Activated CD8-positive, alpha-beta T cell treated with anti-CD3 and anti-CD28 coated beads for 36 hours (primary cell): ENCODE measurements at regions of chr14 and their contacts with region 1.

Region 1: DNA sequence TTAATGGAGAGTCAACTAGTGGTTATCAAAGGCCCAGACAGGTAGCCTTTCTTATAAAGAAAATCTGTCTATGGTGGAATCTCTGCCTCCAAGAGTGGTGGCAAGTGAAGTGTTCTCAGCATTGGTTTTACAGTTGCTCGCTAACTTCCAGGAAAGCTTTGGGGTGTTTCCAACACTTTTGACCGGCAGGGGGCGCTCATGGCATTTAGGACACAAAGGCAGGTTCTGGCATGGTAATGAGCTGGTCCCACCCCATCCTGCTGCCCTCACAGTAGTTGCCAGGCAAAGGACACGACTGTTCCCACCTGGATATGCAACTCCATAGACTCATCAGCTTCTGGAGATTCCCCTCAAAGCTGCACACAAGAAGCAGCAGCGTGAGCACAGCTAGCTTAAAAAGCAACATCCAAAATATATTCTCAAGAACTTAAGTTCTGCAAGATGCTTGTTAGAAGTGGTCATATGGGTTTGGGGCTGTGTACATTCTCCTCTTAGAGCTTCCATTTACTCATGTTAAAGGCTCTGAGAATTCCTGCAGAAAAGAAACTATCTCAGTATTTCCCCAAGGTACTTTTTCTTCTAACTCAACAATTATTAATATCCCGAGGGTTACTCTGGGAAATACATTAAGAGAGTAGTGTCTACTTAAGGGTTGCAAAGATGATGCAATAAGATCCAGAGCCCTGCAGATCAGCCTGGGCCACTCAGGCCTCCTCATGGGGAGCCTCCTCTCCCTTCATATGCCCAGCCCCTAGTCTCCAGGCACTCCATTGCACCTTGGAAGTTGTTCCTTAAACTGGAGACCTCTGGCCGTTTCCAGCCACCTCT is 14.8 kb downstream of the PROX2 start:
- DNase-seq: peak; percentile 97
- ATAC-seq: peak; percentile 83
- H3K4me3 Mint-ChIP-seq: no peak overlapping the region
- H3K27ac Mint-ChIP-seq: no peak overlapping the region
- H3K4me1 Mint-ChIP-seq: peaks cover 5% of the 10 kb centered on the region
- H3K27me3 Mint-ChIP-seq: no peaks in the 10 kb centered on the region
- CTCF ChIP-seq: peak; percentile 91

Region 2: DNA sequence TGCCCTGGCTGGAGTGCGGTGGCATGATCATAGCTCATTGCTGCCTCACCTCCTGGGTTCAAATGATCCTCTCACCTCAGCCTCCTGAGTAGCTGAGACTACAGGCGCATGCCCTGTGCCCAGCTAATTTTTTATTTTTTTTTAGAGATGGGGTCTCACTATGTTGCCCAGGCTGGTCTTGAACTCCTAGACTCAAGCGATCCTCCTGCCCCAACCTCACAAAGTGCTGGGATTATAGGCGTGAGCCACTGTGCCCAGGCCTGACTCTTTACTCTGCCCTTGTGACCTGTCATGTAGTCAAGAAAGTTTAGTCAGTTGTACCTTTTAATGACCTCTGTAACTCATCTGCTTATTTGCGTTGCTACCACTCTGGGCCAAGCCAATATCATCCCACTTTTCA is 40.8 kb before region 1 on chr14:
- CTCF ChIA-PET with region 1: no interaction called
- POLR2A ChIA-PET with region 1: no interaction called
- intact Hi-C with region 1: no loop called
- DNase-seq: no peak
- ATAC-seq: no peak
- H3K4me3 Mint-ChIP-seq: no peak overlapping the region
- H3K27ac Mint-ChIP-seq: no peak overlapping the region
- H3K4me1 Mint-ChIP-seq: peaks cover 5% of the 10 kb centered on the region
- H3K27me3 Mint-ChIP-seq: no peaks in the 10 kb centered on the region
- CTCF ChIP-seq: no peak

Region 3: GRCh38 chr14:74841230-74842207 is 19.6 kb before region 1 on chr14:
- CTCF ChIA-PET with region 1: interaction called, 70 read pairs
- POLR2A ChIA-PET with region 1: interaction called, 19 read pairs
- intact Hi-C with region 1: no loop called
- DNase-seq: peak; percentile 56
- ATAC-seq: peak; percentile 78
- H3K4me3 Mint-ChIP-seq: peak overlapping the region; percentile 0
- H3K27ac Mint-ChIP-seq: peak overlapping the region; percentile 60
- H3K4me1 Mint-ChIP-seq: peaks cover 64% of the 10 kb centered on the region
- H3K27me3 Mint-ChIP-seq: no peaks in the 10 kb centered on the region
- CTCF ChIP-seq: no peak

Region 4: GRCh38 chr14:74893614-74894091 is 32.5 kb after region 1 on chr14:
- CTCF ChIA-PET with region 1: interaction called, 94 read pairs
- POLR2A ChIA-PET with region 1: interaction called, 4 read pairs
- intact Hi-C with region 1: no loop called
- DNase-seq: no peak
- ATAC-seq: no peak
- H3K4me3 Mint-ChIP-seq: no peak overlapping the region
- H3K27ac Mint-ChIP-seq: peak overlapping the region; percentile 34
- H3K4me1 Mint-ChIP-seq: no peaks in the 10 kb centered on the region
- H3K27me3 Mint-ChIP-seq: no peaks in the 10 kb centered on the region
- CTCF ChIP-seq: no peak

Region 5: DNA sequence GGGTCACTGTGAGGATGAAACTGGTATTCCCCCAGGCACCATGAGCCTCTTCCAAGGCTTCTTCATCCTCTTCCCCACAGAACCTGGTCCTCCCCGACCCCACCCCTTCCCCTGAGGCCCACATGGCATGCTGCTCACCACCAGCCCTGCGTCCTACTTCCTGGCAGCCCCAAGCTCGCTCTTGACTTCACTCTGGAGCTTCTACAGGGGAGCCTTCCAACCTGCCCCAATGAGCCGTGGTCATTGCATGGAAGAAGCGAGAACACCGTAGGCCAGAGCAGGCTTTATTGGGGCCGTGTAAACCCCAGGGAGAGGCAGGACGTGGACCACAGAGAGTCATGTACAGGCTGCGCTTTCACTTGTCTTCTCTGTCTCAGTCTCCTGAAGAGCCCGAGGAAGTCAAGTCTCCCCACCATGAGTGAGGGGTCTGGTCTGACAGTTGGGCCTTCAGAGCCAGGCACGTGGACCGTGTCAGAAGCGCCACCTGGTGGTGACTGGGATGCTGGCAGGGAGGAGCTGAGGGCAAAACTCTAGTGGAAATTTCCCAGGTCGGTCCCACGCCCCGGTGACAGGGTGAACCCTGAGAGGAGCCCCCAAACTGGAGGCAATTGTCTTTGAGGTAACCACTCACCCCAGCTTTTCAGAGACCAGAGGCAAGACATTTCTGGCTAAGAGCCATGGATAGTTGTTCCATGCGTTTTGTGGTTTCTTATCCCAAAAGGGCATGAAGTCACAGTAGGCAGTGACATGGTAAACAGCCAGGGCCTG is 44.4 kb after region 1 on chr14:
- CTCF ChIA-PET with region 1: interaction called, 528 read pairs
- POLR2A ChIA-PET with region 1: interaction called, 22 read pairs
- intact Hi-C with region 1: loop called (anchors 1 kb)
- DNase-seq: peak; percentile 84
- ATAC-seq: peak; percentile 81
- H3K4me3 Mint-ChIP-seq: no peak overlapping the region
- H3K27ac Mint-ChIP-seq: peak overlapping the region; percentile 55
- H3K4me1 Mint-ChIP-seq: peaks cover 10% of the 10 kb centered on the region
- H3K27me3 Mint-ChIP-seq: no peaks in the 10 kb centered on the region
- CTCF ChIP-seq: peak; percentile 97

Region 6: DNA sequence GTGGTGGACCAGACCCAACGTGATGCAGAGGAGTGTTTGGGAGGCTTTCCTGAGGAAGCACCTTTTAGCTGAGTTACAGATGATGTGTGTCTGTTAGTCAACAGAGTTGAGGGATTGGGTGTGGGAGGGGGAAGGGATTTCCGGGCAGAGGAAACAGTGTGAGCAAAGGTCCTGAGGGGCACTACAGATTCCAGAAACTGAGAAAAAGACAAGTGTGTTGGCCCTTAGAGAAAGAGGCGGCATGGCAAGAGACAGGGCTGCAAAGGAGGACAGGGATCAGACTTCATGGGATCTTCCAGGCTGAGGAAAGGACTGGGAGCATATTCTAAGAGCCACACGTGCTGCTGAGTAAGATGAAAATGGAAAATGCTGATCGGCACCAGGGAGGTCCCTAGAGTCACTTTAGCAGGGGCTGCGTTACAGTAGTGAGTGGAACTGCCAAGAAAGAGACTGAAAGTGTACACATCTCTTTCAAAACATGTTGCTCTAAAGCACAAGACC is 71.3 kb after region 1 on chr14:
- CTCF ChIA-PET with region 1: interaction called, 11 read pairs
- POLR2A ChIA-PET with region 1: no interaction called
- intact Hi-C with region 1: no loop called
- DNase-seq: no peak
- ATAC-seq: peak; percentile 30
- H3K4me3 Mint-ChIP-seq: no peak overlapping the region
- H3K27ac Mint-ChIP-seq: no peak overlapping the region
- H3K4me1 Mint-ChIP-seq: peaks cover 12% of the 10 kb centered on the region
- H3K27me3 Mint-ChIP-seq: no peaks in the 10 kb centered on the region
- CTCF ChIP-seq: no peak

Region 7: DNA sequence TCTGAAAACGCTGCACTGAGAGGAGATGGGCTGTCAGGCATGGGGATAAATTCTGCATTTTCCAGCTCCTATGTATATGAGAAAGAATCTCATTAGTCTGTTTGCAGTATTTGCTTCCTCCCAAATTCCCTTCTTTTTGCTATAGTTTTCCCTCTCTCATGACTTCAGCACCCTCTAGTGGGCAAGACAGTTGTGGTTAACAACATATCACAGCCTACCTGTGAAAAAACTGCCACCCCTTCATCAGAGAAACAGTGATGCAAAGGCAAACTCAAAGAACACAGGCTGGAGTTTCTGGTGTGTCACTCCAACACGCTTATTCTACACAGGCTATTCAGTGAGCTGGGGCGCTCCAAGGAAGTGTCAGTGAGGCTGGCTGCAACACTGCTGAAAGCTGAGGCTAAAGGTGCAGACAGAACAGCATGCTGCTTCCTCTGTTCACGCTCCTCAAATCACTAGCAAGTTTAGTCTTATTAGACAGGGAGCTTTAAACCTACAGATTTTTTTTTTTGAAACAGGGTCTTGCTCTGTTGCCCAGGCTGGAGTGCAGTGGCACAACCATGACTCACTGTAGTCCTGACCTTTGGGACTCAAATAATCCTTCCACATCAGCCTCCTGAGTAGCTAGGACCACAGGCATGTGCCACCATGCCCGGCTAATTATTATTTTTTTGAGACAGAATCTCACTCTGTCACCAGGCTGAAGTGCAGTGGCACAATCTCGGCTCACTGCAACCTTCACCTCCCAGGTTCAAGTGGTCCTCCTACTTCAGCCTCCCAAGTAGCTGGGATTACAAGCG is 227.7 kb after region 1 on chr14:
- CTCF ChIA-PET with region 1: interaction called, 55 read pairs
- POLR2A ChIA-PET with region 1: no interaction called
- intact Hi-C with region 1: loop called (anchors 10 kb)
- DNase-seq: peak; percentile 59
- ATAC-seq: peak; percentile 51
- H3K4me3 Mint-ChIP-seq: no peak overlapping the region
- H3K27ac Mint-ChIP-seq: no peak overlapping the region
- H3K4me1 Mint-ChIP-seq: peaks cover under 1% of the 10 kb centered on the region
- H3K27me3 Mint-ChIP-seq: no peaks in the 10 kb centered on the region
- CTCF ChIP-seq: peak; percentile 84